Mammary epithelial cell (primary cell): ENCODE measurements at regions of chr12 and their contacts with region 1.

Region 1: GRCh38 chr12:47651368-47652254 is 54.2 kb downstream of the RPAP3 start:
- DNase-seq: peak; percentile 55
- H3K4me3 ChIP-seq: no peak overlapping the region
- H3K27ac ChIP-seq: no peak overlapping the region
- H3K4me1 ChIP-seq: no peaks in the 10 kb centered on the region
- H3K27me3 ChIP-seq: no peaks in the 10 kb centered on the region
- CTCF ChIP-seq: peak; percentile 63 to 66

Region 2: DNA sequence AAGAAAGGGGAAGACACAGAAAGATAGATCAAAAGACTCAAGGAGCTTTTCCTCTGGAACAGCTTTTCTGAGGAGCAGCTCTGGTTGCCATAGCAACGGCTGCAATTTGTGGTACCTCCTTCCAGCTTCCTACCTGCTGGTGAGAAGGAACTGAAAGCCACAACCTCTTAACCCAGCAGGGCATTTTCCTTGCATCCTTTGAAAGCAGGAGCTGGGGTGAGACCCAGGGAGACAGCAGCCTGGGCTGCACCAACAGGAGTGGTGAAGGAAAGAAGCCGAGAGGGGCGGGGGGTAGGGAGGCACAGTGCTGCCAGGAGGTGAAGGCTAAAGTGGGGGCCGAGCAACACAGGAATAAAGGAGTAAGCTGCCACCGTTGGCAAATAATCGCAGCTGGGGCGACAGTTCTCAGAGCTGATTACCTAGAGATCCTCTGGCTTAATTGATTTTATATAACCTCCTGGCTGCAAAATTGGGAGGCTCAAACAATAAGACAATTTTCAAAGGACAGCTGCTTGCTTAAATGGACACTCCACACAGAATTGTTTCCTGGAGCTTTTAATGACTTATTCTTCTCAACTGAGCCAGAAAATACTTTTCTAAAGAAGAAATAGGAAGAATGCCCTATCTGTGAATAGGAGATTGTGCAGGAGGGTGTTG is 75.2 kb before region 1 on chr12:
- CTCF ChIA-PET with region 1: no interaction called
- dilution Hi-C with region 1: no loop called
- in situ Hi-C with region 1: no loop called
- intact Hi-C with region 1: no loop called
- DNase-seq: no peak
- H3K4me3 ChIP-seq: no peak overlapping the region
- H3K27ac ChIP-seq: no peak overlapping the region
- H3K4me1 ChIP-seq: no peaks in the 10 kb centered on the region
- H3K27me3 ChIP-seq: peaks cover 2% of the 10 kb centered on the region
- CTCF ChIP-seq: no peak

Region 3: GRCh38 chr12:47686645-47687240 is 35.1 kb after region 1 on chr12:
- CTCF ChIA-PET with region 1: interaction called, 4 read pairs
- dilution Hi-C with region 1: no loop called
- in situ Hi-C with region 1: no loop called
- intact Hi-C with region 1: loop called (anchors 1 kb)
- DNase-seq: peak; percentile 5
- H3K4me3 ChIP-seq: no peak overlapping the region
- H3K27ac ChIP-seq: no peak overlapping the region
- H3K4me1 ChIP-seq: no peaks in the 10 kb centered on the region
- H3K27me3 ChIP-seq: no peaks in the 10 kb centered on the region
- CTCF ChIP-seq: peak; percentile 54 to 79

Region 4: GRCh38 chr12:47705566-47706425 is 54.2 kb after region 1 on chr12 and contains the start of gene RPAP3:
- CTCF ChIA-PET with region 1: no interaction called
- dilution Hi-C with region 1: no loop called
- in situ Hi-C with region 1: no loop called
- intact Hi-C with region 1: no loop called
- DNase-seq: peak; percentile 90
- H3K4me3 ChIP-seq: peak within 1 kb of the TSS; percentile 53 to 92 (median 67)
- H3K27ac ChIP-seq: peak within 1 kb of the TSS; percentile 46
- H3K4me1 ChIP-seq: peaks cover 9% of the 10 kb centered on the region
- H3K27me3 ChIP-seq: no peaks in the 10 kb centered on the region
- CTCF ChIP-seq: peak; percentile 24 to 67
- total RNA-seq, gene RPAP3: 14.8 to 32.7 TPM